Panc1 (cell line): ENCODE measurements at regions of chr1 and their contacts with region 1.

Region 1: GRCh38 chr1:113978863-113979702 is at the start of gene OLFML3:
- DNase-seq: peak; percentile 30
- ATAC-seq: peak; percentile 81
- H3K4me3 ChIP-seq: no peak within 1 kb of the TSS
- H3K27ac ChIP-seq: no peak within 1 kb of the TSS
- H3K4me1 ChIP-seq: no peaks in the 10 kb centered on the region
- H3K27me3 ChIP-seq: no peaks in the 10 kb centered on the region
- CTCF ChIP-seq: peak; percentile 74
- total RNA-seq, gene OLFML3: 0.15 TPM

Region 2: DNA sequence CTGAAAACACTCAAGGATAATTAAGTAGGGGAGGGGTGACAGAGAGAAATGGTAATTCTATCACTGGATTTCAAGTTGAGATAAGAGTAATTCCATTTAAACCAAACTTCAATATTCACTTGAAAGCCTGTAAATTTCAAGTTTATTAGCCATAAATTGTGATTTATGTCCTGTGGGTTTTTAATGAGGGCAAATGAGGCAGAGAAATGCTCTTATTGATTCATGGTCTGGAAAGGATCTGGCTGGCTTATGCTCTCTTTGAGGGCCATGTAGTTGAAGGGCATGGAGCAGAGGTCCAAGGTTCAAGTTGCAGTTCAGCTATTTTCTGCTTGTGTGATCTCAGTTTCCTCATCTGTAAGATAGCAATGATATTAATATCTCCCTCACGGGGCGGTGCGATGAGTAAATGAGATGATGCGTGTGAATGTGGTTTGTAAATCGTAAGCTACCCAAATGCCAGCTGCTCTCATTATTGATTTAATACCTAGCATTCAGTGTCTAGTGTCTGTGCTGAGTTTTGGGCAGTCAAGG is 12.4 kb after region 1 on chr1:
- CTCF ChIA-PET with region 1: no interaction called
- POLR2A ChIA-PET with region 1: no interaction called
- in situ Hi-C with region 1: no loop called
- intact Hi-C with region 1: no loop called
- DNase-seq: no peak
- ATAC-seq: no peak
- H3K4me3 ChIP-seq: no peak overlapping the region
- H3K27ac ChIP-seq: no peak overlapping the region
- H3K4me1 ChIP-seq: no peaks in the 10 kb centered on the region
- H3K27me3 ChIP-seq: no peaks in the 10 kb centered on the region
- CTCF ChIP-seq: no peak

Region 3: DNA sequence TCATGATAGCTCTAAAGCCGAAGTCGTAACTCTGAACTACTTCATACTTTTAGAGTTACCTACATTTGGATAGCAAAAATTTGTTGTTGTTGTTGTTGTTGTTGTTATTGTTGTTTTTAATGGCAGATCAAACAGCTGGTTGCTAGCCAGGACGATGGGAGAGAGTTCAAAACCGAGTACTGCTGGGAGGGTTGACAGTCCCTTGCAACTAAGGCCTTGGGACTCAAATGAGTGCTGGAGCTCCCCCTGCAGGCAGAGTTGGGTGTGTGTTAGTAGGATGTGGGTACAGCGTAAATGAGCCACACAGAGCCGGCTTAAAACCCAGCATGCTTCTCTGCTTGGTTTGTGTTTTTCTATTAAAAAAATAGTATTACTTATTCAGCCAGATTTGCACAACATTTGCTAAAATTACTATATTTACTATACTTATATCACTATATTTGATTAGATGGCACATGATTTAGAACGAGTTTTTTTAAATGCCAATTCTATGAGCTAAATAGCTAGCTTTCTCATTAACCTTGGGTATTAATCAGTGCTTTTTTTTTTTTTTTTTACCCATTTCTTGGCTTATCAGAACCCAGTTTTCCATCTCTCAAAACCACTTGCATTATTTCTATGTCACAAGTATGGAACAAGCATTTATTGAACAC is 303.8 kb after region 1 on chr1:
- CTCF ChIA-PET with region 1: interaction called, 14 read pairs
- POLR2A ChIA-PET with region 1: no interaction called
- in situ Hi-C with region 1: no loop called
- intact Hi-C with region 1: loop called (anchors 2 kb)
- DNase-seq: peak; percentile 64
- ATAC-seq: peak; percentile 98
- H3K4me3 ChIP-seq: no peak overlapping the region
- H3K27ac ChIP-seq: no peak overlapping the region
- H3K4me1 ChIP-seq: no peaks in the 10 kb centered on the region
- H3K27me3 ChIP-seq: no peaks in the 10 kb centered on the region
- CTCF ChIP-seq: peak; percentile 86